Heart right ventricle (tissue), 16 donors: ENCODE measurements at regions of chr1 and their contacts with region 1.

Region 1: GRCh38 chr1:152052606-152053005 is 15.8 kb upstream of the S100A11 start:
- DNase-seq: peak; percentile 81 to 84
- ATAC-seq: peak in 6 of 8 donors; percentile 31 to 57 (median 50)
- H3K4me3 ChIP-seq: no peak overlapping the region
- H3K27ac ChIP-seq: no peak overlapping the region
- H3K4me1 ChIP-seq: peaks cover 2 to 42% (median 11%) of the 10 kb centered on the region in 9 donors
- H3K27me3 ChIP-seq: peaks cover 0 to 48% (median 30%) of the 10 kb centered on the region in 7 donors
- CTCF ChIP-seq: peak; percentile 79 to 95 (median 91)

Region 2: GRCh38 chr1:151881456-151881855 is 171.2 kb before region 1 on chr1:
- intact Hi-C with region 1: no loop called
- DNase-seq: no peak
- ATAC-seq: no peak
- H3K4me3 ChIP-seq: no peak overlapping the region
- H3K27ac ChIP-seq: no peak overlapping the region
- H3K4me1 ChIP-seq: no peaks in the 10 kb centered on the region
- H3K27me3 ChIP-seq: no peaks in the 10 kb centered on the region
- CTCF ChIP-seq: peak in 1 of 9 donors; percentile 18

Region 3: DNA sequence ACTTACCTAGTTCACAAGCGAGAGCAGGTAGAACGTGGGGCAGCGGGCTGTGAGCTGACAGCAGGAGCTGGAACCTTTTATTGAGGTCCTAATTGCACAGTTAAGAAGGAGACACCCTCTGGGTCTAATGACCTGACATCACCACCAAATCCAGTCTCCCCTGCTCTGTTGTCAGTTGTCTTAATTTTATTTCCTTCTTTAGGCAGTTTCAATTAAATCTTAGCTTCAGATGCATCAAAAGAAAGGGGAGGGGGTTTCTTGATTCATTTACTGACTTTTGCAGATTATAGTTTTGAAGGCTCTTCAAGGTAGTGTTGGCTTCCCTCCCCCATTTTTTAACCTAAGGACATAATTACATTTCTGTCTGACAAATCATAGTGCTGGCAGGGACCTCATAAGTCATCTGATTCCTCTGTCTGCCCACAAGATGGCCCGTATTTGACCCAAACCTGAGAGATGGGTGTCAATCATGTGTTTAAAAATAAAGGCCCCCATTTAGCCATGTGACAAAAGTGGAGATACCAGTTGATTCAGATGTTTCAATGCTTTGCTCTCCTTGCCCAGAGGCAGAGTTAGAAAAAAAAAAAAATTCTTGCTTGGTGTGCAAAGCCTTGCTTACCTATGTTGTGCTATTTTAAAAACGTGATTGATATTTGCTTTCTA is 36.5 kb after region 1 on chr1 and contains the start of gene TCHHL1:
- intact Hi-C with region 1: no loop called
- DNase-seq: no peak
- ATAC-seq: no peak
- H3K4me3 ChIP-seq: no peak within 1 kb of the TSS
- H3K27ac ChIP-seq: no peak within 1 kb of the TSS
- H3K4me1 ChIP-seq: no peaks in the 10 kb centered on the region
- H3K27me3 ChIP-seq: peaks cover 0 to 40% (median 18%) of the 10 kb centered on the region in 7 donors
- CTCF ChIP-seq: no peak
- total RNA-seq, gene TCHHL1: not detected

Region 4: DNA sequence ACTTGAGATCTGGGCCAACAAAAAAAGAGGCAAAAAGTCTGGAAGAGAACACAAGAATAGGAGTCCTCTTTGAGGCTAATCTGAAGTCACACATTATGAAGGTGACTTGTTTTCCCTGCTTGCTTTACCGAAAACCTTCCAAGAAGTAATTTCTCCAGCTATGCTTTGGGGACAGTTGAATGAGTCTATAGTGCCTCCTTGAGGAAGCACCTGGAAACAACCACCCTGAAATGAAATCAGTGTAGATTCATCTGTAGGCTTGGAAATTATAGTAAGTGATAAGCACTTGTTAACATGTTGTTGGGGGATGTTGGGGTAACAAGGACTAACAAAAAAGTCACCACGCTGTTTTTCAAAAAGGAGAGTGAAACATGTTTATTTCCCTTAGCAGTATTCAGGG is 129.8 kb after region 1 on chr1:
- intact Hi-C with region 1: loop called (anchors 1 to 5 kb)
- DNase-seq: no peak
- ATAC-seq: no peak
- H3K4me3 ChIP-seq: no peak overlapping the region
- H3K27ac ChIP-seq: no peak overlapping the region
- H3K4me1 ChIP-seq: peaks cover 0 to 8% (median 0%) of the 10 kb centered on the region in 9 donors
- H3K27me3 ChIP-seq: peaks cover 0 to 6% (median 0%) of the 10 kb centered on the region in 7 donors
- CTCF ChIP-seq: peak in 7 of 9 donors; percentile 36 to 59 (median 40)

Region 5: GRCh38 chr1:152448095-152448494 is 395.5 kb after region 1 on chr1:
- intact Hi-C with region 1: loop called in 2 of 10 experiments (anchors 5 kb)
- DNase-seq: no peak
- ATAC-seq: no peak
- H3K4me3 ChIP-seq: no peak overlapping the region
- H3K27ac ChIP-seq: no peak overlapping the region
- H3K4me1 ChIP-seq: peaks cover 0 to 13% (median 3%) of the 10 kb centered on the region in 9 donors
- H3K27me3 ChIP-seq: peaks cover 0 to 14% (median 0%) of the 10 kb centered on the region in 7 donors
- CTCF ChIP-seq: no peak

Region 6: DNA sequence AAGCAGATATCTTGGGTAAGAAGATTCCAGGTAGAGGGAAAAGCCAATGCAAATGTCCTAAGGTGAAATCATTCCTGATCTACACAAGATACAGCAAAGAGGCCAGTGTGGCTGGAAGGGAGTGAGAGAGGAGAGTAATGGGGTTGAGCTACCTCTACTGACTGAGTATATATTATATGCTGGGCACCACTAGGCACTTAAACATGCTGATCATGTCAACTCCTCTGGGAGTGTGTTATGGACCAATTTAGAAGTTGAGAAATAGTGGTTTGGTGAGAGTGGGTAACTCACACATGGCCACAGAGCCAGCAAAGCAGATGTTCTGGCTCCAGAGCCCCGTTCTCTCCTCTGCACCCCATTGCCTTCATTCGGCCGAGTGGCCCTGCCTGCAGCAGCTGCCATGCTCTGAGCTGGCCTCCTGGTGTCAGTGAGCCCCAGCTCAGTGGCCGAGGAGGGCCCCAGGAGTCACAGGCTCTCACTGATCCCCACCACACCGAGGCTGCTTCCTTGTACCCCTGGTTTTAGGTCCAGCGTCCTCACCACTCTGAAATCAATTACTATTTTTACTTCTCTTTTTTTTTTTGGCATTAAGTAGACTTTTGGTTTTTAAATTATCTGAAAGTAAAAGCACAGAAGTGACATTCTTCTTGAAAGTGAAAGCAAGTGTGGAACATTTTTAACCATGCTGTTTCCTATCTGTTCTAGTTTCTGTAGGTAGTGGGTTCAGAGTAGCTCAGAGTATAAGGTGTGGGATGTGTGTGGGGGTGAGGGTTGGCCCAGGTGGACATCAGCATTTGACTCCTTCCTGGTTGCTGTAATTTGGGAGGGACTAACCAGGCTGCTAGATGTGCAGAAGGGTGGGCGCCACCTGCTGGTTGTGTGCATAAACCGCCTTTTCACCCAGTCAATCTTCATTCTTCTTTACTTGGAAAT is 407.3 kb after region 1 on chr1:
- intact Hi-C with region 1: loop called in 8 of 10 experiments (anchors 2 to 5 kb)
- DNase-seq: peak; percentile 55 to 79
- ATAC-seq: peak in 7 of 8 donors; percentile 51 to 77 (median 69)
- H3K4me3 ChIP-seq: peak overlapping the region in 4 of 10 donors; percentile 3 to 33 (median 24)
- H3K27ac ChIP-seq: peak overlapping the region in 3 of 10 donors; percentile 12 to 82 (median 16)
- H3K4me1 ChIP-seq: peaks cover 0 to 12% (median 4%) of the 10 kb centered on the region in 9 donors
- H3K27me3 ChIP-seq: peaks cover 0 to 3% (median 0%) of the 10 kb centered on the region in 7 donors
- CTCF ChIP-seq: peak; percentile 66 to 83 (median 77)